Endothelial cell of umbilical vein (primary cell): ENCODE measurements at regions of chr11 and their contacts with region 1.

Region 1: GRCh38 chr11:109946322-109946846 is 146.8 kb upstream of the ZC3H12C start:
- DNase-seq: peak; percentile 97
- H3K4me3 ChIP-seq: peak overlapping the region in 1 of 3 experiments; percentile 31
- H3K27ac ChIP-seq: peak overlapping the region; percentile 95
- H3K4me1 ChIP-seq: peaks cover 8% of the 10 kb centered on the region
- H3K27me3 ChIP-seq: no peaks in the 10 kb centered on the region
- CTCF ChIP-seq: peak; percentile 91
- POLR2A ChIP-seq: no peak

Region 2: DNA sequence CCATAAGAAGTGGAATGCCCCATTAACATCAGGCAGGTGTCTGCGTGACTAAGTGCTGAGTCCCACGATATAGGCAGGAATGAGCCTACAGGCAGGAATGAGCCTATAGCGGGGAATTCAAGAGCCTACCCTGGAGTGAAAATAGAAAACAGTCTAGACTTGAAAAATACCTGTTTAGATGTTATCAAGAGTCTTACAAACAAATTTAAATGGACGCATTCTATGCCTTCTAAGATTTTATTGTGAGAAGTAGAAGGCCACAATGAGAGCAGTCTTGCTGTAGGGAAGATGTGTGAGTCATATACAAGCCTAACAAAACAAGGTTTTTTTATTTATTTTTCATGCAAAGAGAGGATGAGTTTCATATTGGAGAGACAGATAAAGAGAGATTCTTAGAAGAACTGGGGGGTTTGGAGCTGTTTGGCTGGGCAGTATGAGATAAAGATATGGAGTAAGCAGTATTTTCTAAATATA is 54.0 kb before region 1 on chr11:
- CTCF ChIA-PET with region 1: no interaction called
- POLR2A ChIA-PET with region 1: no interaction called
- dilution Hi-C with region 1: no loop called
- intact Hi-C with region 1: no loop called
- DNase-seq: no peak
- H3K4me3 ChIP-seq: no peak overlapping the region
- H3K27ac ChIP-seq: no peak overlapping the region
- H3K4me1 ChIP-seq: no peaks in the 10 kb centered on the region
- H3K27me3 ChIP-seq: peaks cover 6 to 7% of the 10 kb centered on the region in 2 experiments
- CTCF ChIP-seq: no peak
- POLR2A ChIP-seq: no peak

Region 3: GRCh38 chr11:110046775-110047380 is 100.5 kb after region 1 on chr11:
- CTCF ChIA-PET with region 1: no interaction called
- POLR2A ChIA-PET with region 1: no interaction called
- dilution Hi-C with region 1: no loop called
- intact Hi-C with region 1: no loop called
- DNase-seq: no peak
- H3K4me3 ChIP-seq: no peak overlapping the region
- H3K27ac ChIP-seq: no peak overlapping the region
- H3K4me1 ChIP-seq: no peaks in the 10 kb centered on the region
- H3K27me3 ChIP-seq: no peaks in the 10 kb centered on the region
- CTCF ChIP-seq: no peak
- POLR2A ChIP-seq: no peak

Region 4: DNA sequence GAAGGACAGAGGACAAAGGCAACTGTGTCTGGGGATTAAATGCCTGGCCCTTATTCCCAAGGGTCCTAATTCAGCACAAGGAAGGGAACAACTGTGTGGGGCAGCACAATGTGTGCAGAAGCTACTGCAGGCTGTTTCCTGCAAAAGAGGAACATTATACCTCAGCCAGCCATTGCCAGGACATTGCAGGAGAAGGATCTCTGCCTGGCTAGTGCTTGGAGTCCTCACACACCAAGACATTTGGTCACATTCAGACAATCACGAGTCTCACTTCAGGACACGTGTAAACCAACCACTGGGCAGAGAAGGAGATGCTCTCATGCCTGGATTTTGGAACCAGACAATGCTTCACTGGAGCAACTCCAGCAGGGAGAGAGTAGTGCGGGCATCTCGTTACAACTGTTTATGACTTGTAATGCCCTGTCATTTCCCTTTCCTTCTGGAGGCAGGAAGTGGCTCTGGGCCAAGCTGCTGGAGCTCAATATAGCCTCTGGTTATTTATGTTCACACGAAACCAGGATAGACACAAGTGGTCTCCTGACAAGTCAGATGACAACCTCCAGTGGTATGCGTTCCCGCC is 122.9 kb after region 1 on chr11:
- CTCF ChIA-PET with region 1: interaction called, 3 read pairs
- POLR2A ChIA-PET with region 1: no interaction called
- dilution Hi-C with region 1: no loop called
- intact Hi-C with region 1: loop called (anchors 1 kb)
- DNase-seq: peak; percentile 97
- H3K4me3 ChIP-seq: no peak overlapping the region
- H3K27ac ChIP-seq: peak overlapping the region; percentile 95
- H3K4me1 ChIP-seq: peaks cover 22% of the 10 kb centered on the region
- H3K27me3 ChIP-seq: no peaks in the 10 kb centered on the region
- CTCF ChIP-seq: no peak
- POLR2A ChIP-seq: peak; percentile 71

Region 5: GRCh38 chr11:110173811-110174644 is 227.6 kb after region 1 on chr11:
- CTCF ChIA-PET with region 1: interaction called, 3 read pairs
- POLR2A ChIA-PET with region 1: no interaction called
- dilution Hi-C with region 1: no loop called
- intact Hi-C with region 1: loop called (anchors 1 kb)
- DNase-seq: peak; percentile 77
- H3K4me3 ChIP-seq: peak overlapping the region in 1 of 3 experiments; percentile 34
- H3K27ac ChIP-seq: no peak overlapping the region
- H3K4me1 ChIP-seq: peaks cover 7% of the 10 kb centered on the region
- H3K27me3 ChIP-seq: no peaks in the 10 kb centered on the region
- CTCF ChIP-seq: peak; percentile 87 to 92
- POLR2A ChIP-seq: no peak

Region 6: GRCh38 chr11:110362971-110363509 is 416.7 kb after region 1 on chr11:
- CTCF ChIA-PET with region 1: interaction called, 9 read pairs
- POLR2A ChIA-PET with region 1: no interaction called
- dilution Hi-C with region 1: no loop called
- intact Hi-C with region 1: loop called (anchors 2 kb)
- DNase-seq: peak; percentile 95
- H3K4me3 ChIP-seq: peak overlapping the region in 1 of 3 experiments; percentile 2
- H3K27ac ChIP-seq: peak overlapping the region; percentile 85
- H3K4me1 ChIP-seq: peaks cover 28% of the 10 kb centered on the region
- H3K27me3 ChIP-seq: no peaks in the 10 kb centered on the region
- CTCF ChIP-seq: no peak
- POLR2A ChIP-seq: no peak

Region 7: GRCh38 chr11:110429731-110430266 is 483.4 kb after region 1 on chr11 and contains the start of gene FDX1:
- CTCF ChIA-PET with region 1: interaction called, 3 read pairs
- POLR2A ChIA-PET with region 1: no interaction called
- dilution Hi-C with region 1: no loop called
- intact Hi-C with region 1: loop called (anchors 1 kb)
- DNase-seq: peak; percentile 84
- H3K4me3 ChIP-seq: peak within 1 kb of the TSS; percentile 23 to 75 (median 57)
- H3K27ac ChIP-seq: peak within 1 kb of the TSS; percentile 72
- H3K4me1 ChIP-seq: peaks cover 27% of the 10 kb centered on the region
- H3K27me3 ChIP-seq: no peaks in the 10 kb centered on the region
- CTCF ChIP-seq: peak; percentile 50 to 59
- POLR2A ChIP-seq: no peak
- total RNA-seq, gene FDX1: 9.9 and 11.0 TPM in 2 replicates